ENCODE measurements at regions of chr5 and their contacts with region 1.

Region 1: GRCh38 chr5:176447982-176448608 is at the start of gene FAF2:
- DNase-seq: peak; percentile 99
- H3K4me3 ChIP-seq: peak within 1 kb of the TSS; percentile 64 to 92 (median 78)
- H3K27ac ChIP-seq: peak within 1 kb of the TSS; percentile 89 to 97 (median 96)
- H3K4me1 ChIP-seq: peaks cover 17 to 60% (median 54%) of the 10 kb centered on the region in 6 donors
- H3K27me3 ChIP-seq: no peaks in the 10 kb centered on the region
- CTCF ChIP-seq: peak; percentile 100
- POLR2A ChIP-seq: no peak
- total RNA-seq, gene FAF2: 28.6 to 41.3 (median 34.0) TPM

Region 2: GRCh38 chr5:176415952-176416924 is 31.9 kb before region 1 on chr5 and contains the start of gene CLTB:
- intact Hi-C with region 1: loop called (anchors 2 kb)
- DNase-seq: peak; percentile 99
- H3K4me3 ChIP-seq: peak within 1 kb of the TSS; percentile 65 to 91 (median 86)
- H3K27ac ChIP-seq: peak within 1 kb of the TSS; percentile 78 to 94 (median 88)
- H3K4me1 ChIP-seq: peaks cover 14 to 60% (median 41%) of the 10 kb centered on the region in 6 donors
- H3K27me3 ChIP-seq: no peaks in the 10 kb centered on the region
- CTCF ChIP-seq: peak in 10 of 11 experiments; percentile 11 to 94 (median 90)
- POLR2A ChIP-seq: peak in 2 of 3 donors; percentile 38 to 88
- total RNA-seq, gene CLTB: 51.9 to 70.2 (median 62.9) TPM

Region 3: DNA sequence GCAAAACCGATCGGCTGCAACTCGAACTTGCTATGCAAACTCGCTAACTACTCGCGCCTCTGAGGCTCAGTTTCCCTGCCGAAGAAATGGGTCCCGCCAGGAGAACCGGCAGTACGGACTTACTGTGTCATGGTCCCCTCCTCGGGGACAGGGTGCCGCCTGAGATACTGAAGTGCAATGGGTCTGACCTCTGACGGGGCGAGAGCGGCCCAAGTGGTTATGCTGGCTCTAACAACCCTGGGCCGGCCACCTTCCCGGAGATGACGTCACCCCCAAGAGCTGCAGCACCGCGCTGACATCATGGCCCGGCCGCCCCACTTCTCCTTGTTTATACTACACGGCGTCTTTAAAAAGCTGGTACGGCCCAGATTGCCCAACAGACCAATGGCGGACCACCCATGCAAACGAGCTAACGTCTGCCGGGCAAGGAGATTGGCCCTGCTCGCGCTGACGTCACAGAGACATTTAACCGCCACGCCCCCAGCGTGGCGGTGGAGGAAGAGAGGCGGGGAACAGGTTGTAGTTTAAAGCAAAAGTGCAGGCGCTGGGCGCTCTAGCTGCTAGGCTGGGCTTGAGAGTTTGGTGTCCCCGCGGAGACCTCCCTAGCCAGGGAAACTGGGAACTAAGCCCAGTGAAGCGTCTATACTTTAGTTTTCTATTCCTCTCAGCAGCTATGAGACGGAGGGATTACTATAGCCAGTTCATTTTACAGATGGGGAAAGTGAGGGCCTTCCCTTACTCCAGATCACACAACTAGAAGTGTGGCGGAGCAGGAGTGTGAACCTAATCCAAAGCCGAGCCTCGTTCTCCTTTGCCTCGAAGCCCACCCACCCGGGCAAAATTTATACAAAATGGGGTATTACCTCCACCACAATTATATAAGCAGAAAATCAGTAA is 89.8 kb after region 1 on chr5:
- intact Hi-C with region 1: loop called (anchors 10 kb)
- DNase-seq: peak; percentile 99
- H3K4me3 ChIP-seq: peak overlapping the region; percentile 90 to 99 (median 98)
- H3K27ac ChIP-seq: peak overlapping the region; percentile 94 to 100 (median 99)
- H3K4me1 ChIP-seq: peaks cover 49 to 85% (median 81%) of the 10 kb centered on the region in 6 donors
- H3K27me3 ChIP-seq: no peaks in the 10 kb centered on the region
- CTCF ChIP-seq: no peak
- POLR2A ChIP-seq: peak in 2 of 3 donors; percentile 37 to 51

Measured in spleen (tissue), 13 donors.